Activated CD4-positive, alpha-beta memory T cell treated with anti-CD3 and anti-CD28 coated beads, Interleukin-2, amount 10 ng/mL, durations not matched to agents 7 days and 5 days (primary cell): ENCODE measurements at regions of chr15 and their contacts with region 1.

Region 1: GRCh38 chr15:40307421-40308211 is at the start of gene PLCB2:
- DNase-seq: peak; percentile 78
- H3K4me3 Mint-ChIP-seq: peak within 1 kb of the TSS; percentile 97
- H3K27ac Mint-ChIP-seq: peak within 1 kb of the TSS; percentile 97
- H3K4me1 Mint-ChIP-seq: peaks cover 43% of the 10 kb centered on the region
- H3K27me3 Mint-ChIP-seq: peaks cover 5% of the 10 kb centered on the region
- total RNA-seq, gene PLCB2: 140 TPM

Region 2: DNA sequence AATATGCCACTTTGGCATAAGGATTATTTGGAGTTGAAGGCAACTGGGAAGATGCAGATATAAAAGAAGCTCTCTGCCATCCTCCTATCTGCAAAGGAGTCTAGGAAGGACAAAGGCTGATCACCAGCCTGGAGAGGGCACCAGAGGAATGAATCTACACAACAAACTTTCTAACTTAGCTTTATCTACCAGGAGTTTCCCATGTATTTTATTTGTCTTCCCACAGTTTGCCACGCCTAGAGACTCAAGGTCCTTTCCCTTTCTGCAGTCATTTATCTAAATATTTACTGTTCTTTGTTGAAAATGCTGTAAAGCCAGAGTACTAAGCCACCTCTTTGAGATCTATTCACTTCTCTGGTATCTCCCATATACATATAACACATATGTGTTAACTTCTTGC is 419.8 kb before region 1 on chr15:
- CTCF ChIA-PET with region 1: no interaction called
- POLR2A ChIA-PET with region 1: no interaction called
- DNase-seq: no peak
- H3K4me3 Mint-ChIP-seq: no peak overlapping the region
- H3K27ac Mint-ChIP-seq: no peak overlapping the region
- H3K4me1 Mint-ChIP-seq: no peaks in the 10 kb centered on the region
- H3K27me3 Mint-ChIP-seq: peaks cover 20% of the 10 kb centered on the region

Region 3: DNA sequence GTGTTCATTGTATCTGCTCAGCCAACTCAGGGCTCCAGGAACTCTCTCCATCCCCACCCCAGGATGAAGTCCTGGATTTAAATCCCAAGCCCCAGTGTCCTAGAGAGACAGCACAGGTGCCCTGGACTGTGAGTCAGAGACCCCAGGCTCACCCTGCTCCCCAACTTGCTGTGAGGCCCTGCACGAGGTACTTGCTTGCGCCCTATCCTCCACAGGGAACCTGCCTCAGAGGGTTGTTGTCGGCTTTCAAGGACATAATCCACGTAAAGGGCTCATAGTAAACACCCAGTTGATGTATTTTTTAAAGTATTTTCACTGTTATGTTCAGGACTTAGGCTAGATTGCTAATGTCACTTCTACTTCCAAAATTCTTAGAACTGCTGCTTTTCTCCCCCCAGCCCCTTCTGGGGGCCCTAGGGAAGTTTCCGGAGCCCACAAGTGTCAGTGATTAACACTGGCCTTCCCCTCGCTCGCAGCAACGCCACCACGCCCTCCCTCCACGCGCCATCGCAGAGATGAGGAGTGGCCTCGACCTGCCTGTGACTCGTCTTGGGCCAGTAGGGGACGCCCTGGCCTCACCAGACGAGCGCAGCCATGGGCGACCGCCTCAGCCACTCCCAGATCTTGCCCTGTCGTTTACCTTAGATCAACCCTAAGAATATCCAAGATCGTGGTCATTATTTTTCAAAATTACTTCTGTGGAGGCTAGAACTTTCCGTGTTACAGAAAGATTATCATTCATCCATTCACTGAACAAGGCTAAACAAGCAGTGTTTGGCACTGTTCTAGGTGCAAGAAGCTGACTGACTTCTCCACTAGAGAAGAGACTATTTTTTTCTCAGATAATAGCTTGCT is 262.7 kb before region 1 on chr15:
- CTCF ChIA-PET with region 1: interaction called, 14 read pairs
- POLR2A ChIA-PET with region 1: interaction called, 12 read pairs
- DNase-seq: peak; percentile 88
- H3K4me3 Mint-ChIP-seq: no peak overlapping the region
- H3K27ac Mint-ChIP-seq: peak overlapping the region; percentile 47
- H3K4me1 Mint-ChIP-seq: peaks cover 77% of the 10 kb centered on the region
- H3K27me3 Mint-ChIP-seq: no peaks in the 10 kb centered on the region

Region 4: DNA sequence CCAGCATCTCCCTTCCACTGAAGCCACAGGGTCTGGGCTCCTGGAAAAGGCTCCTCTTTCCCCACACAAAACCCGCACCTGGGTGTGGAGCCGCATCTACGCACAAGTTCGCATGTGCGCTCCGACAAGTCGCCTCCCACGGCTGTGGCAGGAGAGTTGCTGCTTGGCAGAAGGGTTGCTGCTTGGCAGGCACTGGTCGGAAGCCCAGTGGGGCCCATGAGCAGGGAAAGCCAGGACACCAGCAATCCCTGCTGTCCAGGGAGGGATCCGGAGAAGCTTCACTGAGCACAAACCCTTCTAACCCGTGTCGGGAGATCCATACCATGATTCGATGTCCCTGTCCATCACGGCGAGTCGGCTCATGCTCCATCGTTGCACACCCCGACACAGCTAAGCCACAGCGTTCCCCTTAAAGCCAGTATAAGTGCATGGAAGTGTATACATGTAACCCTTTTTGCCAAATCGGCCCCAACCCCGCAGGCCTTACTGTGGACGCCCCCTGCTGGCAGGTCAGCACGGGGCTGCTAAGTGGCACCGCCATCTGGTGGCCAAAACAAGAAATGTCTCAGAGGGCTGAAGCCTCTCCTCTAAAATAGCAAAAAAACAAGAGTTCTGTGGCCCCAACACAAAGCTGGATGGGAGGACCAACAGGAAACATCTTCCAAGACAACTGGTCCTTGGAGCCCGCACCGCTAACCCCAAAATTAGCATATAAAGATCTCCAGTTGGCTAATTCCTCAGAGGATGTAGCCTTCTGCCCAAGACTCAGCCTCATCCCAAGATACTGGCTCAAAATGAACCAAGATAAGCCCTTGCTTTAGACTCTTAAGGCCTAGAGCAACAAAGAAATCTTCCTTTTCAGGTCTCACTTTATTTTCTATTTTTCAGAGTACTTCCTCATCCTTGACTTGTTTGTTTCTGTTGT is 33.0 kb before region 1 on chr15:
- CTCF ChIA-PET with region 1: interaction called, 262 read pairs
- POLR2A ChIA-PET with region 1: interaction called, 8 read pairs
- DNase-seq: peak; percentile 90
- H3K4me3 Mint-ChIP-seq: no peak overlapping the region
- H3K27ac Mint-ChIP-seq: no peak overlapping the region
- H3K4me1 Mint-ChIP-seq: peaks cover 5% of the 10 kb centered on the region
- H3K27me3 Mint-ChIP-seq: peaks cover 26% of the 10 kb centered on the region

Region 5: GRCh38 chr15:40323239-40323952 is 15.8 kb after region 1 on chr15 and contains the start of gene INAFM2:
- CTCF ChIA-PET with region 1: interaction called, 133 read pairs
- POLR2A ChIA-PET with region 1: interaction called, 44 read pairs
- DNase-seq: peak; percentile 89
- H3K4me3 Mint-ChIP-seq: peak within 1 kb of the TSS; percentile 63
- H3K27ac Mint-ChIP-seq: no peak within 1 kb of the TSS
- H3K4me1 Mint-ChIP-seq: peaks cover 34% of the 10 kb centered on the region
- H3K27me3 Mint-ChIP-seq: peaks cover 11% of the 10 kb centered on the region
- total RNA-seq, gene INAFM2: 8.7 to 8.9 TPM

Region 6: GRCh38 chr15:40338041-40338657 is 30.5 kb after region 1 on chr15:
- CTCF ChIA-PET with region 1: interaction called, 157 read pairs
- POLR2A ChIA-PET with region 1: interaction called, 37 read pairs
- DNase-seq: peak; percentile 80
- H3K4me3 Mint-ChIP-seq: no peak overlapping the region
- H3K27ac Mint-ChIP-seq: no peak overlapping the region
- H3K4me1 Mint-ChIP-seq: peaks cover 24% of the 10 kb centered on the region
- H3K27me3 Mint-ChIP-seq: no peaks in the 10 kb centered on the region

Region 7: DNA sequence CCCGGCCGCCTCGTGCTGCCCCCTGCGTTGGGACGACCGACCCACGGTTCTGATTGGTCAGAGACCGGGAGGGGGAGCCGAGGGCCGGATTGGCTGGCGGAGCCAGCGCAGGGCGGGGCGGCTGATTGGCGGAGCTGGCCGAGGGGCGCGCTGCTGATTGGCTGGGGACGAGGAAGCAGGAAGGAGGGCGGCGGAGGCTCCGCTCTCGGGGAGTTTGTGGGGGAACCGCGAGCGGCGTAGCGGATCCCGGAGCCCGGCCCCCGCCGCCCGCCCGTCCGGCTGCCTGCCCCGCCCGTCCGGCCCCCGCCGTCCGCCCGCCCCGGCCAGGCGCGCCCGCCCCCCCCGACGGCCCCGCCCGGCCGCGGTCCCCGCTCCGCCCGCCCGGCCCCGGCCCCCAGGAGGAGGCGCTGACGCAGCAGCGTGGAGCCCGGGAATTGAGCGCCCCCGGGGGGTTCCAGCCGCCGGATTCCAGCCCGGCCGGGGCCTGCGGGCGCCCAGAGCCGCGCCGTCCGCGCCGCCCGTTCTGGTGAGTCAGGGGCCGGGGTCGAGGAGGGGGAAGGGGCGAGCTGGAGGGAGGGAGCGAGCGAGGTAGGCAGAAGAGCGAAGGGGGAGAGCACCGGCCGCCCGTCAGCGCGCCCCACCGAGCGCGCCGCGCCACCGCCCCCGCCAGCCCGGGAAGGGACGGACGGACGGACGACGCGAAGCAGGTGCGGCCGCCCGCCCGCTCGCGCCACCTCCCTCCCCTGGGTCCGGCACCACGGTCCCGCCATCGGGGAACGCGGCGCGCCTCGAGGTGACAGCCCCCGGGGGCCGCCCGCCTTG is 133.3 kb after region 1 on chr15 and contains the start of gene BAHD1:
- CTCF ChIA-PET with region 1: interaction called, 3 read pairs
- POLR2A ChIA-PET with region 1: interaction called, 14 read pairs
- DNase-seq: peak; percentile 96
- H3K4me3 Mint-ChIP-seq: peak within 1 kb of the TSS; percentile 87
- H3K27ac Mint-ChIP-seq: peak within 1 kb of the TSS; percentile 49
- H3K4me1 Mint-ChIP-seq: peaks cover 45% of the 10 kb centered on the region
- H3K27me3 Mint-ChIP-seq: peaks cover 54% of the 10 kb centered on the region
- total RNA-seq, gene BAHD1: 26.0 to 27.0 TPM

Region 8: GRCh38 chr15:40477642-40478327 is 170.2 kb after region 1 on chr15:
- CTCF ChIA-PET with region 1: no interaction called
- POLR2A ChIA-PET with region 1: no interaction called
- DNase-seq: no peak
- H3K4me3 Mint-ChIP-seq: no peak overlapping the region
- H3K27ac Mint-ChIP-seq: no peak overlapping the region
- H3K4me1 Mint-ChIP-seq: peaks cover 3% of the 10 kb centered on the region
- H3K27me3 Mint-ChIP-seq: peaks cover 38% of the 10 kb centered on the region